Esophagus muscularis mucosa (tissue), 4 donors: ENCODE measurements at regions of chr5 and their contacts with region 1.

Region 1: DNA sequence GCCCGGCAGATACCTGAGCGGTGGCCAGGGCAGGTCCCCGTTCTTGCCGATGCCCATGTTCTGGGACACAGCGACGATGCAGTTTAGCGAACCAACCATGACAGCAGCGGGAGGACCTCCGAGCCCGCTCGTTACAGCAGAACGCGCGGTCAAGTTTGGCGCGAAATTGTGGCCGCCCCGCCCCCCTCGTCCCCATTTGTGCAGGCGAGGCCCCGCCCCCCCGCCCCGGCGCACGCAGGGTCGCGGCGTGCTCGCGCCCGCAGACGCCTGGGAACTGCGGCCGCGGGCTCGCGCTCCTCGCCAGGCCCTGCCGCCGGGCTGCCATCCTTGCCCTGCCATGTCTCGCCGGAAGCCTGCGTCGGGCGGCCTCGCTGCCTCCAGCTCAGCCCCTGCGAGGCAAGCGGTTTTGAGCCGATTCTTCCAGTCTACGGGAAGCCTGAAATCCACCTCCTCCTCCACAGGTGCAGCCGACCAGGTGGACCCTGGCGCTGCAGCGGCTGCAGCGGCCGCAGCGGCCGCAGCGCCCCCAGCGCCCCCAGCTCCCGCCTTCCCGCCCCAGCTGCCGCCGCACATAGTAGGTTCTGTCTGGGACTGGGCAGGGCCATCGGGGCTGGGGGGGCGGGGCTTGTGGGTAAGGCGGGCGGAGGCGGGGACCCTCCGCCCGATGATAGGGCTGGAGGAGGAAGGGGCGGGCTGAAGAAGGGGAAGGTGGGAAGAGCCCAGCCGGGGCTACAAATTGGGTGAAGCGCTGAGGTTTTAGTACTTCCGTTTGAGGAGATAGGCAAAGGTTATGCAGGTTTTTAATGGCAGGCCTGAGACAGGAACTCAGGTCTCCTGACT is at the starts of genes DHFR and MSH3:
- DNase-seq: peak; percentile 96
- H3K4me3 ChIP-seq: peak within 1 kb of the TSS; percentile 76 to 99 (median 93)
- H3K27ac ChIP-seq: peak within 1 kb of the TSS; percentile 87 to 97 (median 94)
- H3K4me1 ChIP-seq: peaks cover 12 to 21% (median 19%) of the 10 kb centered on the region in 4 donors
- H3K27me3 ChIP-seq: no peaks in the 10 kb centered on the region
- CTCF ChIP-seq: peak in 2 of 3 experiments; percentile 9 to 20
- EP300 ChIP-seq: no peak
- POLR2A ChIP-seq: no peak
- total RNA-seq, gene DHFR: 4.7 to 11.6 (median 8.5) TPM
- total RNA-seq, gene MSH3: 7.6 to 11.6 (median 9.3) TPM

Region 2: GRCh38 chr5:80296121-80296520 is 358.5 kb before region 1 on chr5:
- intact Hi-C with region 1: no loop called
- DNase-seq: no peak
- H3K4me3 ChIP-seq: no peak overlapping the region
- H3K27ac ChIP-seq: no peak overlapping the region
- H3K4me1 ChIP-seq: no peaks in the 10 kb centered on the region
- H3K27me3 ChIP-seq: no peaks in the 10 kb centered on the region
- CTCF ChIP-seq: no peak
- EP300 ChIP-seq: no peak
- POLR2A ChIP-seq: no peak

Region 3: GRCh38 chr5:80407735-80408482 is 246.7 kb before region 1 on chr5 and contains the start of gene ZFYVE16:
- intact Hi-C with region 1: loop called (anchors 5 kb)
- DNase-seq: peak; percentile 99
- H3K4me3 ChIP-seq: peak within 1 kb of the TSS; percentile 59 to 95 (median 74)
- H3K27ac ChIP-seq: peak within 1 kb of the TSS; percentile 95 to 96 (median 96)
- H3K4me1 ChIP-seq: peaks cover 24 to 37% (median 35%) of the 10 kb centered on the region in 4 donors
- H3K27me3 ChIP-seq: no peaks in the 10 kb centered on the region
- CTCF ChIP-seq: no peak
- EP300 ChIP-seq: no peak
- POLR2A ChIP-seq: peak; percentile 57
- total RNA-seq, gene ZFYVE16: 16.8 to 40.7 (median 22.8) TPM

Region 4: DNA sequence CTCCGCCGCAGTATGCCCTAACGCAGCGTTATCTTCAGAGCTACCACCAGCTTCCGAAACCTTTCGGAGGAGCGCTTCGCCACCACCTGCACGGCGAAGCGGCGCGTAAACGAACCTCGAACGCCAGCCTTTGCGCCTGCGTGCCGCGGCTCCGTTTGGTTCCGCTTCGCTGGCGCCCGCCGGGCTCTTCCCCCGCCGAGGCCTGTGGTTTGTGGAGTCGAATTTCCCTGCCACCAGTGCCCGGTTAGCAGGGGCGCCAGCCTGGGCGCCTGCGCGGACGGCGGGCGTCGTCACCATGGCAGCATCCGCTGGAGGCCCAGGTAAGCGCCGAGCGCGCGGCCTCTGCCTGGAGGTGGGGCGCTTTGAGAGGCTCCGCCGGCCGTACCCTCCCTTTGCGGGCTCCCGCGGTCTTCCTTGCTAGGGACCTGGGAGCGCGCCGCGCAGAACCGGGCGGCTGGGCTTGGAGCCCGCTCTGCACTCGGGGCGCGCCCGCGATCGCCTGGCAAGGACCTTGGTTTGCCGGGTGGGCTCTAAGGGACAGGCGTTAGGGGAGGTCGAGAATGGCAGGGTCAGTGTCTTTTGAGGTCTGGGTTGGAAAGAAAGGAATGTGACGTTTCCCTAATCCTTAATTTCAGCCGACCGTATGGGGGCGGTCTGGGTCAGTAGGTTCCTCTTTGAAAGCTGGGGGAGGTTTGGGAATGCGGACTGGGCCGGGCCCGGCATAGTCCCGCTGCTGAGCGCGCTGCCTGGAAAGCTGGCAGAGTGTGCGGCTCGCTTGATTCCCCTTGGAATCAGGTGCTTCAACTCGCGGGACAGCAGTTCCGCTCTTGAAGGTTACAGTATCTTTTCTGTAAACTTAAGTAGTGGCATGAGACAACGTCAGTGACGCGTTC is 166.5 kb before region 1 on chr5 and contains the start of gene FAM151B:
- intact Hi-C with region 1: loop called (anchors 5 kb)
- DNase-seq: peak; percentile 92
- H3K4me3 ChIP-seq: peak within 1 kb of the TSS; percentile 69 to 85 (median 75)
- H3K27ac ChIP-seq: peak within 1 kb of the TSS; percentile 75 to 88 (median 82)
- H3K4me1 ChIP-seq: peaks cover 0 to 14% (median 12%) of the 10 kb centered on the region in 4 donors
- H3K27me3 ChIP-seq: no peaks in the 10 kb centered on the region
- CTCF ChIP-seq: peak in 1 of 3 experiments; percentile 16
- EP300 ChIP-seq: no peak
- POLR2A ChIP-seq: no peak
- total RNA-seq, gene FAM151B: 1.6 to 2.6 (median 2.2) TPM

Region 5: DNA sequence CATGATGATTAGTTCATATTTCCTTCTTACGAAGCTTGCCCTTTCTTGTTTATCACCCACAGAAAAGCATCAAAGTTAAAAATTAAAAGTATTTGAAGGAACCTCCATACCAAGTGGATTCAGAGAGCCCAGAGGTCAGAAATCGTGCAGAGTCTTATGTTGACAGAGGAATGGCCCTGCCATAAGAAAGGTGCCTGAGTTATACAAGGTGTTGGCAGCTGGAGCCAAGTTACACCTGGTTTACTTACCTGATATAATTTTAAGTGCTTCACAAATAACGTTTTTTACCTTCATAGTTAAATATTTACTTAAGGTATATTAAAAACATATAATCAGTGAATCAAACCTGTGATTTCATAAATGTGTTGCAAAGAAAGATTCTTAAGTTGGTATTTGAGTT is 42.5 kb after region 1 on chr5:
- intact Hi-C with region 1: no loop called
- DNase-seq: no peak
- H3K4me3 ChIP-seq: no peak overlapping the region
- H3K27ac ChIP-seq: no peak overlapping the region
- H3K4me1 ChIP-seq: no peaks in the 10 kb centered on the region
- H3K27me3 ChIP-seq: no peaks in the 10 kb centered on the region
- CTCF ChIP-seq: no peak
- EP300 ChIP-seq: no peak
- POLR2A ChIP-seq: no peak